ENCODE measurements at regions of chr1 and their contacts with region 1.

Region 1: GRCh38 chr1:1399187-1399871 is at the start of gene CCNL2:
- DNase-seq: peak; percentile 90 to 98
- H3K4me3 ChIP-seq: peak within 1 kb of the TSS; percentile 80
- H3K27ac ChIP-seq: peak within 1 kb of the TSS; percentile 36
- H3K4me1 ChIP-seq: peaks cover 25% of the 10 kb centered on the region
- H3K27me3 ChIP-seq: no peaks in the 10 kb centered on the region
- CTCF ChIP-seq: peak; percentile 33; the same call in 1 of the 2 replicates
- total RNA-seq, gene CCNL2: 162 and 183 TPM in 2 replicates

Region 2: GRCh38 chr1:1355416-1355815 is 43.9 kb before region 1 on chr1:
- CTCF ChIA-PET with region 1: interaction called, 21 read pairs
- POLR2A ChIA-PET with region 1: no interaction called
- intact Hi-C with region 1: no loop called
- DNase-seq: peak in 1 of 2 experiments; percentile 8
- H3K4me3 ChIP-seq: no peak overlapping the region
- H3K27ac ChIP-seq: no peak overlapping the region
- H3K4me1 ChIP-seq: peaks cover 19% of the 10 kb centered on the region
- H3K27me3 ChIP-seq: no peaks in the 10 kb centered on the region
- CTCF ChIP-seq: no peak

Region 3: DNA sequence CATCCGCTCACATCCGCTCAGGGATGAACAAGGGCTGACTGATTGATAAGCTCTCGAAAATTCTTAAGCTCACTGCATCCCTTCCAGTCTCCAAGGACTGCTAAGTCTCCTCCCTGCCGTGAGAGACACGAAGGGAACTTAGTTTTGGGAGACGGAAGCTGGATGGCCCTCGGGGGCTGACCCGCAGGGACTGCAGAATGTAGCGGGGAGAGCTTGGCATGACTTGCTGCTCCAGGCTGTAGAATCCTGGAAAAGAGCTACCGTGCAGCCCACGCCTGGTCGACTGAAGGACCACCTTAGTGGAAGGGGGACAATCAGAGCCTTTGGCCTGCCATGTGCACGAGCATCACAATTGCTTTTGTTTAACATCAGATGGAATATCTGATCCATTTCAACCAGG is 16.4 kb after region 1 on chr1:
- CTCF ChIA-PET with region 1: no interaction called
- POLR2A ChIA-PET with region 1: no interaction called
- intact Hi-C with region 1: no loop called
- DNase-seq: no peak
- H3K4me3 ChIP-seq: no peak overlapping the region
- H3K27ac ChIP-seq: no peak overlapping the region
- H3K4me1 ChIP-seq: no peaks in the 10 kb centered on the region
- H3K27me3 ChIP-seq: no peaks in the 10 kb centered on the region
- CTCF ChIP-seq: no peak

Region 4: GRCh38 chr1:1471389-1472052 is 72.2 kb after region 1 on chr1 and contains the start of gene ATAD3B:
- CTCF ChIA-PET with region 1: no interaction called
- POLR2A ChIA-PET with region 1: no interaction called
- intact Hi-C with region 1: loop called (anchors 2 kb)
- DNase-seq: peak; percentile 79 to 88
- H3K4me3 ChIP-seq: peak within 1 kb of the TSS; percentile 90
- H3K27ac ChIP-seq: peak within 1 kb of the TSS; percentile 68
- H3K4me1 ChIP-seq: peaks cover 13% of the 10 kb centered on the region; the same call in 1 of the 2 replicates
- H3K27me3 ChIP-seq: no peaks in the 10 kb centered on the region
- CTCF ChIP-seq: no peak
- total RNA-seq, gene ATAD3B: 28.5 and 32.8 TPM in 2 replicates